ENCODE measurements at regions of chr2 and their contacts with region 1.

Region 1: GRCh38 chr2:183038341-183039300 is at the start of gene NCKAP1:
- DNase-seq: no peak
- ATAC-seq: peak; percentile 94
- H3K4me3 ChIP-seq: peak within 1 kb of the TSS; percentile 83
- H3K27ac ChIP-seq: no peak within 1 kb of the TSS
- H3K4me1 ChIP-seq: peaks cover 13% of the 10 kb centered on the region; the same call in 1 of the 2 replicates
- H3K27me3 ChIP-seq: peaks cover 6 to 8% of the 10 kb centered on the region in 2 experiments; a peak in 3 of 4 replicates
- CTCF ChIP-seq: peak; percentile 60 to 73 (median 61); a peak in 5 of 6 replicates
- EP300 ChIP-seq: no peak
- POLR2A ChIP-seq: no peak; the same call in 1 of the 2 replicates
- RAD21 ChIP-seq: no peak
- polyA plus RNA-seq, gene NCKAP1: 0.31 to 0.37 TPM

Region 2: GRCh38 chr2:183134016-183134415 is 95.4 kb after region 1 on chr2:
- CTCF ChIA-PET with region 1: no interaction called
- POLR2A ChIA-PET with region 1: no interaction called
- RAD21 ChIA-PET with region 1: no interaction called
- SMC1A ChIA-PET with region 1: no interaction called
- in situ Hi-C with region 1: no loop called
- intact Hi-C with region 1: loop called (anchors 5 kb)
- DNase-seq: no peak
- ATAC-seq: no peak
- H3K4me3 ChIP-seq: no peak overlapping the region
- H3K27ac ChIP-seq: no peak overlapping the region
- H3K4me1 ChIP-seq: no peaks in the 10 kb centered on the region
- H3K27me3 ChIP-seq: no peaks in the 10 kb centered on the region
- CTCF ChIP-seq: no peak
- EP300 ChIP-seq: no peak
- POLR2A ChIP-seq: no peak
- RAD21 ChIP-seq: no peak